Gastrocnemius medialis (tissue), 4 donors: ENCODE measurements at regions of chr14 and their contacts with region 1.

Region 1: GRCh38 chr14:22973217-22974032 is 8.9 kb downstream of the AJUBA start:
- DNase-seq: no peak
- ATAC-seq: peak; percentile 77 to 89
- H3K4me3 ChIP-seq: no peak overlapping the region
- H3K27ac ChIP-seq: no peak overlapping the region
- H3K4me1 ChIP-seq: no peaks in the 10 kb centered on the region
- H3K27me3 ChIP-seq: no peaks in the 10 kb centered on the region
- CTCF ChIP-seq: peak; percentile 49 to 65 (median 63)
- POLR2A ChIP-seq: no peak

Region 2: GRCh38 chr14:22819151-22819988 is 154.1 kb before region 1 on chr14:
- in situ Hi-C with region 1: no loop called
- intact Hi-C with region 1: no loop called
- DNase-seq: no peak
- ATAC-seq: no peak
- H3K4me3 ChIP-seq: peak overlapping the region; percentile 22 to 39 (median 36)
- H3K27ac ChIP-seq: peak overlapping the region; percentile 14 to 50 (median 30)
- H3K4me1 ChIP-seq: peaks cover 6 to 11% of the 10 kb centered on the region in 2 donors
- H3K27me3 ChIP-seq: peaks cover 0 to 2% (median 0%) of the 10 kb centered on the region in 3 donors
- CTCF ChIP-seq: no peak
- POLR2A ChIP-seq: no peak

Region 3: DNA sequence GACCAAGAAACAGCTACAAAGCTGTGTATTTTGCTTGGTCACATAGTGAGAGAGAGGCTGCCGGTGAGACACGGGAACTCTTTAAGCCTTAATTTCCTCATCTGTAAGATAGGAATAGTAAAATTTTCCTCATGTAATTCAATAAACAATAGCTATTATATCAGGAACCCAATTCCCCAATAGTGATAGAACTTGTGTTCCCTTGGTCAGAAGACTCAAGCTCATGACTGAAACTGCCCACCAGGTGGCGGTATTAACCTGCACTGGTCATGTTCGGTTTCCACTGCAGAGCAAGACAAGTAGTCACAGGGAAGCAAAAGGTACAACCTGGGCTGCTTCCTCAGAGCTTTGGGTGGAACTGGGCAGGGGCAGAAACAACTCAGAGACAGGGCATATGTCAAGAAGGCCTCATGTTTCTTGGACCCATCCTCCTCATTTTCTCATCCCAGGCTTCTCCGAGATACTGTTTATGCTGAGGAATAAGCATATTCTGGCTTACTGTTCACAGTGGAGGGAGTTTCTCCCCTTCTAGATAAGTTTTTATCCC is 13.2 kb after region 1 on chr14:
- in situ Hi-C with region 1: no loop called
- intact Hi-C with region 1: loop called (anchors 1 kb)
- DNase-seq: peak; percentile 76 to 80
- ATAC-seq: peak; percentile 83 to 84
- H3K4me3 ChIP-seq: no peak overlapping the region
- H3K27ac ChIP-seq: no peak overlapping the region
- H3K4me1 ChIP-seq: peaks cover 3 to 20% of the 10 kb centered on the region in 2 donors
- H3K27me3 ChIP-seq: peaks cover 9 to 18% (median 17%) of the 10 kb centered on the region in 3 donors
- CTCF ChIP-seq: peak; percentile 76 to 94 (median 84)
- POLR2A ChIP-seq: no peak

Region 4: GRCh38 chr14:23171222-23172012 is 198.0 kb after region 1 on chr14:
- in situ Hi-C with region 1: no loop called
- intact Hi-C with region 1: no loop called
- DNase-seq: no peak
- ATAC-seq: no peak
- H3K4me3 ChIP-seq: no peak overlapping the region
- H3K27ac ChIP-seq: no peak overlapping the region
- H3K4me1 ChIP-seq: peaks cover 27% of the 10 kb centered on the region in 2 donors
- H3K27me3 ChIP-seq: no peaks in the 10 kb centered on the region
- CTCF ChIP-seq: no peak
- POLR2A ChIP-seq: no peak

Region 5: GRCh38 chr14:23320774-23321571 is 347.5 kb after region 1 on chr14 and contains the start of gene PABPN1:
- in situ Hi-C with region 1: no loop called
- intact Hi-C with region 1: no loop called
- DNase-seq: peak; percentile 99 to 100
- ATAC-seq: peak; percentile 92 to 96
- H3K4me3 ChIP-seq: peak within 1 kb of the TSS; percentile 90 to 100 (median 96)
- H3K27ac ChIP-seq: peak within 1 kb of the TSS; percentile 98 to 100 (median 99)
- H3K4me1 ChIP-seq: peaks cover 13 to 25% of the 10 kb centered on the region in 2 donors
- H3K27me3 ChIP-seq: no peaks in the 10 kb centered on the region
- CTCF ChIP-seq: no peak
- POLR2A ChIP-seq: peak; percentile 83 to 86
- total RNA-seq, gene PABPN1: 15.7 to 32.8 (median 26.6) TPM

Region 6: DNA sequence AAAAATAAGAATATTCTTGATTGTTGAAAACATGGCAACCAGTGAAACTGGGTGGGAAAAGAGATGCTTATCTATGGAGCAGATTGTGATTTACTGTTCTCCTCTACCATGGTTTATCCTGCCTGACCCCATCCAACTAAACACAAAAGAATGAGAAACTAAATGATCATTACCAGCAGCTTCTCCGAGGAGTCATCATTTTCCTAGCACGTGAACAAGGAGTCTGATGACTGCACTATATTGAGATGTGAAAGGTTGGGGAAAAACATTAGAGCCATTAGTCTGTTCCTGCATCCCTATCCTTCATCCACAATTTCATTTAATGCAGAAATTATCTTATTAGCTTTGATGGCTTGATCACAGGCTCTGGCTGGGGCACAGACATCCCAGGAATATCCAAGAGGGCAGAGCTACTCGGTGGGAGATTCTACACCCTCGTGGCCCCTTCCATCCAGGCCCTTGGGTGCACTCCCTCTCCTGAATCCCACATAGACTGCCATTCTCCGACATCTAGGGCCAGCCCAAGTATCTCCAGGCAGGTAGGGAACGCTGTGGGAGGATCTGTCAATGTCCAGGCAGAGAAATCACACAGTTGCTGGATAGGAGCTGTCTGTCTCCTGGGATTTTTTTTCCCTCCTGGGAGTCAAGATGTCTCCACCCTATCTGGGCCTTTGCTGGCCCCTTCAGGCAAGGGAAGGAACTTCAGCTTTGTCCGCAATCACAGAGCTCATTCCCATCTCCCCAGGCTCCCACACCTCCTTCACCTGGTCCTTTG is 936.9 kb after region 1 on chr14:
- in situ Hi-C with region 1: no loop called
- intact Hi-C with region 1: no loop called
- DNase-seq: no peak
- ATAC-seq: peak in 1 of 2 donors; percentile 49
- H3K4me3 ChIP-seq: no peak overlapping the region
- H3K27ac ChIP-seq: no peak overlapping the region
- H3K4me1 ChIP-seq: no peaks in the 10 kb centered on the region
- H3K27me3 ChIP-seq: no peaks in the 10 kb centered on the region
- CTCF ChIP-seq: peak in 2 of 5 experiments; percentile 37 to 48
- POLR2A ChIP-seq: no peak